Heart left ventricle (tissue), 16 donors: ENCODE measurements at regions of chr5 and their contacts with region 1.

Region 1: DNA sequence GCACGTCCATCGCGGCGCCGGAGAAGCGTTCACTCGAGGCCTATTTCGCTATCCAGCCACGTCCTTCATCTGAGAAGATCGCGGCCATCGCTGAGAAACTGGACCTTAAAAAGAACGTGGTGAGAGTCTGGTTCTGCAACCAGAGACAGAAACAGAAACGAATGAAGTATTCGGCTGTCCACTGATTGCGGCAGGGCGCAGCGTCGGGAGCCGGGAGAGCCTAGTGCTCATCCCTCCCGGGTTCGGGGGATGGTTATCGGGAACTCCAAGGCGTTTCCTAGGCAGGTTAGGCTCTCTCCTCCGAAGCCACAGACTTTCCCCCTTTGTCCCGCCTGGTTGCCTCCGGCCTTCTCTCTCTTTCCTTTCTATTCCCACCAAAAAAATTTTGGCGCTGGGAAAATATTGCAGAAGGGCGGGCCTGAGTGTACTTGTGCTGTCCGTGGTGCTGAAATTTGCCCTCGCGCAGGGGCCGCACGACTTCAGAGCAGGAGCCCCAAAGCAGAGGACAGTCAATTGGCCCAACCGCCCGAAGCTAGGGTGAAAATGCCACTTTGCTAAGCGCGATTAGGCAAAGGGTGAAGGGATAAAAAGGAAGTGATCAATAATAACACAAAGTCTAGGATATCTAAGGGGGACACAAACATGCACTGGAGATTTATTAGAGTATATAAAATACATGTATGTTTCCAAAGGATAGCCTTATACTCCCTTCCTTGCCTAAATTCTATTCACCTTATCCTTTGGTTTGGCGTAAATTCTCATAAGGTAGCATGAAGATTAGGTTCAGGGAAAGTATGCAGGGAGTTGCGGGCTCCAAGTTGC is 1.8 kb downstream of the POU4F3 start:
- DNase-seq: peak in 4 of 5 donors; percentile 55 to 66 (median 62)
- ATAC-seq: peak in 3 of 4 donors; percentile 52 to 75 (median 53)
- H3K4me3 ChIP-seq: peak overlapping the region in 2 of 12 donors; percentile 3 to 10
- H3K27ac ChIP-seq: no peak overlapping the region
- H3K4me1 ChIP-seq: peaks cover 0 to 34% (median 9%) of the 10 kb centered on the region in 12 donors
- H3K27me3 ChIP-seq: peaks cover 43 to 98% (median 96%) of the 10 kb centered on the region in 9 donors
- CTCF ChIP-seq: no peak
- POLR2A ChIP-seq: no peak

Region 2: GRCh38 chr5:146301626-146302025 is 38.8 kb before region 1 on chr5:
- intact Hi-C with region 1: loop called in 1 of 10 experiments (anchors 2 kb)
- DNase-seq: no peak
- ATAC-seq: no peak
- H3K4me3 ChIP-seq: no peak overlapping the region
- H3K27ac ChIP-seq: no peak overlapping the region
- H3K4me1 ChIP-seq: peaks cover 0 to 12% (median 0%) of the 10 kb centered on the region in 12 donors
- H3K27me3 ChIP-seq: no peaks in the 10 kb centered on the region
- CTCF ChIP-seq: no peak
- POLR2A ChIP-seq: no peak

Region 3: DNA sequence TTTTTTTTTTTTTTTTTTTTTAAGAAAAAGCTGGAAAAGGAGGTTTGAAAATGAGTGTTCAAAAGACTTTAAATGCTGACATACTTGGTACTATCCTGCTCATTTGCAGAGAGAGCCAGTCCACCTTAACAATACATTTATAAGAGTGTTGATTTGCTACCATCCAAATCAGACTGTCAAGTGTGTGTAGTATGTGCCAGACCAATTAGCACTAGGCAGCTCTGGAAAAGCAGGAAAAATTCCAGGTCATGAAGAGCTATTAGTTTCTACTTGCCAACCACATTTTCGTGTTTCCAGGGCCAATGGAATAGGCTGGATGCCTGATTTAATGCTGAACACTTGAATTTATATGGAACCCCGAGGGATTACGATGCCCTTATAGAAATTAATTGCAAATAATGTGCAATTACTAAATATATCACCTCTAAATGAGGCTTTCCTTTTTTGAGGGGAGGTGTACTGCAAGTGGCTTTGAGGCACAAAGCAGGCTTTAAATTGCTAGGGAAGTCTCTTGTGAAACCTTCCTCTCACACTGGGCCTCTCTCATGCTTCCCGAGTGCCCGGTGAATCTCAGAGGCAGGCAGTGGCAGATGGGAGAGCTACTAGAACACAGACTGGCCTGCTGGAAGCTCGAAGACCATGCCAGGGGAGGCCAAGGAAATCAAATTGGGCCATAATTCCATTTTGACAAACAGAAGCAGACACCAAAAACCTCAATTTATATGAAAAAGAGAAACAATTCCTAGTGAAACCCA is 359.4 kb after region 1 on chr5:
- intact Hi-C with region 1: no loop called
- DNase-seq: no peak
- ATAC-seq: no peak
- H3K4me3 ChIP-seq: no peak overlapping the region
- H3K27ac ChIP-seq: no peak overlapping the region
- H3K4me1 ChIP-seq: peaks cover 0 to 5% (median 0%) of the 10 kb centered on the region in 12 donors
- H3K27me3 ChIP-seq: no peaks in the 10 kb centered on the region
- CTCF ChIP-seq: no peak
- POLR2A ChIP-seq: no peak